ENCODE measurements at regions of chr17 and their contacts with region 1.

Region 1: DNA sequence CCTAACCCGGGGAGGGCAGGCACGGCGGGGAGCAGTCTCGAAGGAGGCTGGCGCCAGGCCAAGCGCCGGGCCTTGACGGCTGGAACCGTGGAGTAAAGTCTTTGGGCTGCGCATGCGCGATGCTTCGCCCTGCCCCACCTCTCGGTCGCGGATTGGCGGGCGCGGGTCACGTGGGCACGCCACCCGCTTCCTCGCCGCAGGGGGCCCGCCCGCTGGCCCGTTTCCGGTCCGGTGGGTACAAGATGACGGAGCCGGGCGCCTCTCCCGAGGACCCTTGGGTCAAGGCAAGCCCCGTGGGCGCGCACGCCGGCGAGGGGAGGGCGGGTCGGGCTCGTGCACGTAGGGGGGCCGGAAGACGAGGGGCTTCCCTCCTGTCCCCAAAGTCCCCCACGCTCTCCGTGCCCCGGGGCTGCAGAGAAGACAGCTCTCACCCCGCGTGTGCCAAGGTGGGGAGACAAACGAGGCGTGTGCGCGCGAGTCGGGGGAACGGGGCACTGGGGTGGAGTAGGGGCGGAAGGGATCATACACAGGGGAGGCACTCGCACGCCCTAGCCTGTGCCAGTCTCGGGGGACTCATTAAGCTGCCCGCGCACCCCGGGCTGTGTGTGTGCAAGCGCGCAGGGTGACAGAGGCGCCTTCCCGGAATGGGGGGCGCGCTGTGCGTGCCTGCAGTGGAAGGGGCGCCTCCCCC is at the start of gene MLX:
- DNase-seq: peak; percentile 95
- H3K4me3 Mint-ChIP-seq: peak within 1 kb of the TSS; percentile 96
- H3K27ac Mint-ChIP-seq: peak within 1 kb of the TSS; percentile 96
- H3K4me1 Mint-ChIP-seq: peaks cover 41% of the 10 kb centered on the region
- H3K27me3 Mint-ChIP-seq: no peaks in the 10 kb centered on the region
- total RNA-seq, gene MLX: 38.4 to 39.7 TPM

Region 2: GRCh38 chr17:42526031-42526444 is 41.0 kb before region 1 on chr17:
- CTCF ChIA-PET with region 1: no interaction called
- POLR2A ChIA-PET with region 1: no interaction called
- intact Hi-C with region 1: no loop called
- DNase-seq: no peak
- H3K4me3 Mint-ChIP-seq: no peak overlapping the region
- H3K27ac Mint-ChIP-seq: no peak overlapping the region
- H3K4me1 Mint-ChIP-seq: peaks cover 31% of the 10 kb centered on the region
- H3K27me3 Mint-ChIP-seq: peaks cover 9% of the 10 kb centered on the region

Region 3: DNA sequence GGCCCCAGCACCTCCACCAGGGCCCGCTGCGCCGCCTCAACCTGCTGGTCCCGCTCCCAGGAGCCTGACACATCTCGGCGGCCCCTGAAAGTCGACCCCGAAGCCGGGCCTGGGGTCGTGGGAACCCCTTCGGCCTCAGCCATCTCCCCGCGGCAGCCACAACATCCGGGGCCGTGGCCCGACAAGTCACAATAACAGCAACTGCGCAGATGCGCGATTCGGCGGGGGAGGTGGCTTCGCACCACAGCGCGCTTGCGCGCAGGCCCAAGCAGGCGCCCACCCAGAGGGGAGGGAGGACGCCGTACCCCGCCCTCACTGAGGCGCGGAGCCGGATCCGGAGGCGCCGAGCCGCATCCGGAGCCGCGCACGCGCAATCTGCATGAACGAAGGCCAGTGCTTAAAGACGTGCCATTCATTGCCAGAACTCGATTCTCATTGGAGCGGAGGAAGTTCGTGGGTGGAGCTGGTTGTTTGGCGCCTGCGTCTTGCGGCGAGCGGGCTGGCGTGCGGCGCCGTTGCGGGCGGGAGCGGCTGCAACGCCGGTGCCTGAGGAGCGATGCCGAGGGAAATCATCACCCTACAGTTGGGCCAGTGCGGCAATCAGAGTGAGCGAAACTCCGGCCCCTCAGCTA is 42.3 kb after region 1 on chr17 and contains the starts of genes RETREG3 and TUBG1:
- CTCF ChIA-PET with region 1: interaction called, 4 read pairs
- POLR2A ChIA-PET with region 1: interaction called, 3 read pairs
- intact Hi-C with region 1: loop called (anchors 1 kb)
- DNase-seq: peak; percentile 100
- H3K4me3 Mint-ChIP-seq: peak within 1 kb of the TSS; percentile 99
- H3K27ac Mint-ChIP-seq: peak within 1 kb of the TSS; percentile 91
- H3K4me1 Mint-ChIP-seq: peaks cover 41% of the 10 kb centered on the region
- H3K27me3 Mint-ChIP-seq: no peaks in the 10 kb centered on the region
- total RNA-seq, gene RETREG3: 33.7 to 35.3 TPM
- total RNA-seq, gene TUBG1: 92.6 to 101 TPM

Measured in activated CD4-positive, alpha-beta memory T cell treated with anti-CD3 and anti-CD28 coated beads for 36 hours (primary cell).